Activated CD8-positive, alpha-beta T cell treated with anti-CD3 and anti-CD28 coated beads, Interleukin-2, amount 10 ng/mL, durations not matched to agents 7 days and 5 days (primary cell): ENCODE measurements at regions of chr5 and their contacts with region 1.

Region 1: DNA sequence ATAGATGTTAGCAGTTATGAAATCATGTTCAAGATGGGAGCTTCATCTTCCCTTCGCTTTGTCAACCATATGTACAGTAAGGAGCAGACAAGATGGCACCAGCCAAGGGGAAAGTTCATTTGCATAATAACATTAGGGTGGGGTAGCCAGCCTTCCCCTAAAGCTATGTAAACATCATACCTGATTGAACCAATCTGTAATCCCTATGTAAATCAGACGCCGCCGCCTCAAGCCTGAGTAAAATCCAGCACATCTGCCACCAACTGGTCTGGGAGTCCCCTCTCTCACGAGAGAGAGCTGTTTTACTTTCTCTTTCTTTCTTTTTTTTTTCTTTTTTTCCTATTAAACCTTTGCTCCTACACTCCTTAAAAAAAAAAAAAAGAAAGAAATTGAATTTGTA is 30.8 kb upstream of the REEP2 start:
- DNase-seq: peak; percentile 51
- ATAC-seq: peak; percentile 65
- H3K4me3 Mint-ChIP-seq: no peak overlapping the region
- H3K27ac Mint-ChIP-seq: peak overlapping the region; percentile 17
- H3K4me1 Mint-ChIP-seq: peaks cover 13% of the 10 kb centered on the region
- H3K27me3 Mint-ChIP-seq: no peaks in the 10 kb centered on the region

Region 2: DNA sequence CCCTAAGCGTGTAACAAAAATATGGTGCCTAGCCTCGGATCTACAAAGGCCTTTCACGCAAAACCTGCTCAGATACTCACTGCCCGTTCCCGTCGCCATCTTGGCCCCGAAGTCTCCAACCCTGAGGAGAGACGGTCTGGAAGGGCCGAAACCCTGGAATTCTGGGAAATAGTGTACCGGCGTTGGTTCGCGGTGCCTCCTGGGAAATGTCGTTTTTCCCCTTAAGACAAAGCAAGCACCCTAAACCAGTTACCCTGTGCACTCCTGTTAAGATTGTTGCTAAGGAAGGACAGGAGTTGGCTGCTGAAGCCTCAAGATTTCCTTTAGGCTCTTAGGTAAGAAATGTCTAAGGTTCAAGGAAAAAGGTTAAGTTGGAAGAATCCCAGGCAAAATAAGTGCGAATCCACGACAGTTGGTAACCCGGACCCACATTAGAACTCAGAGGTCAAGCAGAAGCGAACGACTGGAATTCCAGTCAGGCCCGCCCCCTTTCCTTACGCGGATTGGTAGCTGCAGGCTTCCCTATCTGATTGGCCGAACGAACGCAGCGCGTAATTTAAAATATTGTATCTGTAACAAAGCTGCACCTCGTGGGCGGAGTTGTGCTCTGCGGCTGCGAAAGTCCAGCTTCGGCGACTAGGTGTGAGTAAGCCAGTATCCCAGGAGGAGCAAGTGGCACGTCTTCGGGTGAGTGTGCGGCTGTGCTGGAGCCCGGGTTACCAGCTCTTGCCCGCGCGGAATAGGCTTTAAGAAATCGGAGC is 229.3 kb before region 1 on chr5 and contains the starts of genes BRD8 and KIF20A:
- CTCF ChIA-PET with region 1: interaction called, 11 read pairs
- POLR2A ChIA-PET with region 1: no interaction called
- DNase-seq: peak; percentile 97
- ATAC-seq: peak; percentile 90
- H3K4me3 Mint-ChIP-seq: no peak within 1 kb of the TSS
- H3K27ac Mint-ChIP-seq: no peak within 1 kb of the TSS
- H3K4me1 Mint-ChIP-seq: peaks cover 15% of the 10 kb centered on the region
- H3K27me3 Mint-ChIP-seq: no peaks in the 10 kb centered on the region
- total RNA-seq, gene BRD8: 72.3 to 76.3 TPM
- total RNA-seq, gene KIF20A: 70.1 to 72.0 TPM

Region 3: DNA sequence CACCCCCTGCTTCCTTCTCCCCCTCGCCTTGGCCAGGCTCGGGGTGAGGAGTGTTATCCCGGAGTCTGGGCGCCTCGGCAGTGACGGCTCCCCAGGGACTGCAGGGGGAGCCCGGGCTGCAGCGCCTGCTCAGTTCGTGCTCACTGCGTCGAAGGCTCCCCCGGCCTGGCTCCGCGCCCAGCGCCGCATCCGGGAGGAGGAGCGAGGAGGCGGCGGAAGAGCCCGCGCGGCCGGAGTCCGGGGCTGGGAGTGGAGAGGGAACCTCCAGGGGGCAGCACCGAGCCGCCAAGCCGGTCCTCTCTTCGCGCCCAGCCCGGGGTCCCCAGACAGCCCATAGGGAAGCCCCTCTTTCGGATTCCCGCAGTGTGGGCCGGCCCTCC is 56.0 kb after region 1 on chr5:
- CTCF ChIA-PET with region 1: no interaction called
- POLR2A ChIA-PET with region 1: no interaction called
- DNase-seq: peak; percentile 93
- ATAC-seq: peak; percentile 52
- H3K4me3 Mint-ChIP-seq: peak overlapping the region; percentile 87
- H3K27ac Mint-ChIP-seq: peak overlapping the region; percentile 96
- H3K4me1 Mint-ChIP-seq: peaks cover 42% of the 10 kb centered on the region
- H3K27me3 Mint-ChIP-seq: peaks cover 20% of the 10 kb centered on the region